AG04449 (cell line): ENCODE measurements at regions of chr10 and their contacts with region 1.

Region 1: GRCh38 chr10:13707156-13707881 is 120.6 kb downstream of the PRPF18 start:
- DNase-seq: no peak
- H3K4me3 ChIP-seq: peak overlapping the region; percentile 81
- CTCF ChIP-seq: no peak

Region 2: DNA sequence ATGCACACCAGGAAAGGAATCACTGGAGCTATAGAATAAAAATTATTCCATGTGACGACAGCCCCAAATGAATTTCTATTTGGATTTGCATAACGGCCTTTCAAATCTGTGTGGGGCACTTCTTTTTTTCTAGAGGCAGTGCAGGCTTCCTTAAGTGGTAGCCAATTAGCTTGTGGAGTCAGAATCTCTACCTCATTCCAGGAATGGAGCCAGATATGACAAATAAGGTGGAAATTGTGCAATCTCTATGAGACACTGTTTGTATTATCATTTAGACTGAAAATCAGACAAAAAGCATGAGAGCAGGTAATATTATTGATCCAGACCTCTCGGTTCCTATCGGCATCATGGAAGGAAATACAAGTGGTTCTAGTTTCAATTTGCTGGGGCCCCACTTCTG is 257.2 kb before region 1 on chr10:
- CTCF ChIA-PET with region 1: no interaction called
- POLR2A ChIA-PET with region 1: no interaction called
- DNase-seq: peak; percentile 31
- H3K4me3 ChIP-seq: no peak overlapping the region
- CTCF ChIP-seq: no peak

Region 3: DNA sequence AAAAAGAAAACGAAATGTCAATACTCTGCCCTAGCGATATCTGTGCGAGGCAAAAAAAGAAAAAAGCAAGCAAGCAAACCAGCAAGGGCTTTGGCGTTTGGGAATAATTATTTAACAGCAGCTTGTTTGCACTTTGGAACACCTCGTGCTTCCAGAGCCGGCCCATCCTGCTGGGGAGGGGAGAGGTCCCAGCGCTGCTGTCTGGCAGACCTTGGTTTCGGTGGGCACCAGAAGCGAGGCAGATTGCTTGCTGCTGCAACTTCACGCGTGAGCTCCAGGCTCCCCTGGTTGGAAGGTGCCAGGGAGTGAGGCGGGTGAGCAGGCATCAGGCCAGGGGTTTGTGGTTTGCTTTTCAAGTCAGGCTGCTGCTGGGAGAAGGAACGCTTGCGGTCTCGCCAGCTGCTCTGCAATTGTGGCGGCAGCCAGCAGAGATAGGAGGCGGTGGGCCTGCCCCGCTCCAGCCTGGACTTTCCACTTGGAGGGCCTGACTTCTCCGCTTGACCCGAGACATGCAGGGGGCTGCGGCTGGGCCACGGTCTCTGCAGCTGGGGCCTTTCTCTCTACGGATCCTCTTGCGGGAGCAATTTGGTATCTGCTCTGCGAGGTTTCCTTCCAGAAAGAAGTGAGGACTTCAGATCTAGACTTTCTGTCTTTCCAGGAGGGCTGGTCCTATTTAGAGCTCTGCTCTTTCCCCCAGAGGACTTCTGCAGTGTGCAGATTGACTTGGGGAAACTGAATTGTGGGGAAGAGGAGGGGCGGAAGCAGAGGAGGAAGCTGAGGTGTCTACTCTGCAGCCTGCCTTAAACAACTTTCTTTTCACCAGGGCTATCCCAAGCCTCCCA is 10.8 kb after region 1 on chr10:
- CTCF ChIA-PET with region 1: interaction called, 6 read pairs
- POLR2A ChIA-PET with region 1: interaction called, 11 read pairs
- DNase-seq: peak; percentile 71
- H3K4me3 ChIP-seq: peak overlapping the region; percentile 44
- CTCF ChIP-seq: no peak

Region 4: GRCh38 chr10:13776861-13777311 is 69.6 kb after region 1 on chr10:
- CTCF ChIA-PET with region 1: interaction called, 13 read pairs
- POLR2A ChIA-PET with region 1: interaction called, 3 read pairs
- DNase-seq: no peak
- H3K4me3 ChIP-seq: no peak overlapping the region
- CTCF ChIP-seq: no peak

Region 5: GRCh38 chr10:13924040-13924725 is 216.9 kb after region 1 on chr10:
- CTCF ChIA-PET with region 1: no interaction called
- POLR2A ChIA-PET with region 1: no interaction called
- DNase-seq: peak; percentile 83
- H3K4me3 ChIP-seq: no peak overlapping the region
- CTCF ChIP-seq: no peak

Region 6: GRCh38 chr10:14032395-14032998 is 325.2 kb after region 1 on chr10:
- CTCF ChIA-PET with region 1: no interaction called
- POLR2A ChIA-PET with region 1: no interaction called
- DNase-seq: no peak
- H3K4me3 ChIP-seq: no peak overlapping the region
- CTCF ChIP-seq: peak; percentile 69

Region 7: GRCh38 chr10:14604181-14605142 is 897.1 kb after region 1 on chr10:
- CTCF ChIA-PET with region 1: no interaction called
- POLR2A ChIA-PET with region 1: no interaction called
- DNase-seq: no peak
- H3K4me3 ChIP-seq: peak overlapping the region; percentile 58
- CTCF ChIP-seq: no peak